Ascending aorta (tissue), 2 donors: ENCODE measurements at regions of chr15 and their contacts with region 1.

Region 1: DNA sequence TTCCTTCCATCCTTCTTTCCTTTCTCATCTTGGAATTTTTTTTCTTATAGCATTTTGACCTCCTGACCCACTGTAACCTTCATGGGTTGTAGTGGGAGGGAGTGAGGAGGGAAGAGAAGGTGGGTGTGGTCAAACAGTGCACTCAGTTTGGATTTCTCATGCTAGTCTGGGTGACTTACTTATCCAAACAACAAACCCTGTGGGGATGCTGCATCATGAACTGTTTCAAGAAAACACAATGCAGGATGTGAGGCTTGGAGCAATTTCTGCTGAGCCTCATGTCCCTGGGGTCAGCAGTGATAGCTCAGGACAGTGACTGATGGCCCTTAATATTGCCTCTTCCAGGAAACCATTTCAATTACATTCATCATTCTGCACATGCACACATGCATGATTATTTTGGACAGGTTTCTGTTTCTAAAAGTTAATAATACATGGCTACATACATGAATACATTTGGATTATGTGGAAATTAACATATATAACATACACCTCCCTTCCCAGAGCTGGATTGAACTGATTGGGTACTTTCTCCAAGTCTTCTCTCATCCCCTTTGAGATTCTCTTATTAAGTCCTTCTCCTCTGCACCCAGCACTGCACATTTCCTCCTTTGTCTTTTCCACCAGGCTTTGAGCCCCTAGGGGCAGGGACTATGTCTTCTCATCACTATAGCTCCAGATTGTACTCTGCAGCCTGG is 61.2 kb downstream of the ADAMTSL3 start:
- DNase-seq: no peak
- H3K4me3 ChIP-seq: no peak overlapping the region
- H3K27ac ChIP-seq: no peak overlapping the region
- H3K4me1 ChIP-seq: peaks cover 12 to 63% of the 10 kb centered on the region in 2 donors
- H3K27me3 ChIP-seq: no peaks in the 10 kb centered on the region
- CTCF ChIP-seq: no peak

Region 2: GRCh38 chr15:83764201-83764838 is 49.2 kb after region 1 on chr15:
- intact Hi-C with region 1: loop called (anchors 5 kb)
- DNase-seq: no peak
- H3K4me3 ChIP-seq: no peak overlapping the region
- H3K27ac ChIP-seq: peak overlapping the region; percentile 67 to 79
- H3K4me1 ChIP-seq: peaks cover 4 to 32% of the 10 kb centered on the region in 2 donors
- H3K27me3 ChIP-seq: no peaks in the 10 kb centered on the region
- CTCF ChIP-seq: no peak